ENCODE measurements at regions of chr13 and their contacts with region 1.

Region 1: DNA sequence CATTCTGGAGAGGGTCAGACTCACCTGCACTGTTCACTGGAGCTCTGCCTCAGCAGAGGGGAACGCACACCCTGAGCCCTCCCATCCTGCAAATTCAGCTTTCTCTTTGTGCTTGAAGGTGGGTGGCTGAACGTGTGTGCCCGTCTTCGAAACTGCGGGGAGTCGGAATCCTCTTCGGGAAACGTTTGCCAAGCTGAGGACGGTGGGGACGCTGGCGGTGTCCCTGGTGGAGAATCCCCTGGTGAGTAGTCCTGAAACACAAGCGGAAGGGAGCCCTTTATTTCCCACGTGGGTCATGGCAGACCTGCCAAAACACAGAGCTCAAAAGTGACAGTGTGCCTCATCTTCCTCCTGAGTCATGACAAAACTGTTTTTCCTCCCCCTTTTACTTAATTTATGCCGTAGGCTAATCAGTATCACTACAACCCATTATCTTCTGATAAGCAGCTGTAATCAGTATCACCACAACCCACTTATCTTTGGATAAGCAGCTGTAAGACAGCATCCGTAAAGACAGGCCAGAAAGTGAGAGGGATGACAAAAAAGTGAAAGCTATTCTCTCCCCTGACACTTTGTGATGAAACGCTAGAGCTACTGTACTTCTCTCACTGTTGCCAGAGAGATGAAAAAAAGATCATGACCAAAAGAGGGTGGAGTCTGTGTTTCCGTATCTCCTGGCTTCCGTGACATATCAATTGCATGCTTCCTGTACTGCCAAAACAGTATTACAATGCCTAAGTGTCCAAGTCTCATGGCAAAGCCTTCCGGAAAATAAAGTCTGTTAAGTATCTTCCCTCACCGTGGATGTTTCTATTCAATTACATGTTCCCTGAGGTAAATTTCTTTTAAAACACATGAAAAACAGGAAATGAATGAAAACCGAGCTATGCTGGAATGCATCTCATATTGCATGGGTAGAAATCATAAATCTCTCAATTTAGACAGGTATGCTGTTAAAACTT is 155.5 kb downstream of the TBC1D4 start:
- DNase-seq: no peak
- ATAC-seq: peak; percentile 89
- H3K4me3 ChIP-seq: peak overlapping the region; percentile 34; the same call in 1 of the 2 replicates
- H3K27ac ChIP-seq: peak overlapping the region; percentile 22
- H3K4me1 ChIP-seq: peaks cover 14% of the 10 kb centered on the region
- H3K27me3 ChIP-seq: no peaks in the 10 kb centered on the region
- CTCF ChIP-seq: no peak
- EP300 ChIP-seq: no peak
- POLR2A ChIP-seq: no peak
- RAD21 ChIP-seq: no peak

Region 2: GRCh38 chr13:75145927-75146326 is 180.5 kb before region 1 on chr13:
- CTCF ChIA-PET with region 1: no interaction called
- POLR2A ChIA-PET with region 1: no interaction called
- RAD21 ChIA-PET with region 1: no interaction called
- SMC1A ChIA-PET with region 1: no interaction called
- in situ Hi-C with region 1: no loop called
- intact Hi-C with region 1: no loop called
- DNase-seq: no peak
- ATAC-seq: no peak
- H3K4me3 ChIP-seq: no peak overlapping the region
- H3K27ac ChIP-seq: no peak overlapping the region
- H3K4me1 ChIP-seq: no peaks in the 10 kb centered on the region
- H3K27me3 ChIP-seq: no peaks in the 10 kb centered on the region
- CTCF ChIP-seq: no peak
- EP300 ChIP-seq: no peak
- POLR2A ChIP-seq: no peak
- RAD21 ChIP-seq: no peak

Region 3: DNA sequence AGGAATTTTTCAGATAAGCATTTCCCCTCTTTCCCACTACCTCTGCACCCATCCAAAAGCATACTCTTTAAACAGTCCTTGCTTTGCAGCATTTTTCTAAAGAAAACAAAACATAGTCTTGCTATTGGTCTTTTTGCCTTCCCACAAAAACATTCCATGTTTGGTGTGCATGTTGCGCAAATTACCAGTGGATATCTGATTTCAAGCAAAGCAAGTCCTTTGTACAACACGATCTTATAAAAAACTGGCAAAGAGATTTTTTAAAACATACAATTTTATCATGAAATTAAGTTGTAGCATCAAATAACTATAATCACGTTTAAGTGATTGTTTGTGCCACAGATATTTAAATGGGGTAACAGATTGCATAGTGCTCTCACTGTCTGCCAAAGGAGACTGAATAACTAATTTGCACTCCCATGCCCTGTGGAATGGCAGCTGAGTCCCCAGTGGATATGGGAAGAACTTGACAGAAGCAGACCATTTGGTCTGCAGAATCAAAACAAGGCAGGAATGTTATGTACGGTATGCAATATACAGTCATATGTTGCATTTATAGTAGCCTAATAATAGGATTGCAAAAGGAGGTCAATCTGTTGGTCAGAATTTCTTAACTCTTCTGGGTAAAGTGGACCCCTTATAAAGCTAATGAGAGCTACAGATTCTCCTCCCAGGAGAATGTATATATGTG is 130.2 kb before region 1 on chr13:
- CTCF ChIA-PET with region 1: no interaction called
- POLR2A ChIA-PET with region 1: no interaction called
- RAD21 ChIA-PET with region 1: no interaction called
- SMC1A ChIA-PET with region 1: no interaction called
- in situ Hi-C with region 1: no loop called
- intact Hi-C with region 1: no loop called
- DNase-seq: no peak
- ATAC-seq: no peak
- H3K4me3 ChIP-seq: no peak overlapping the region
- H3K27ac ChIP-seq: no peak overlapping the region
- H3K4me1 ChIP-seq: no peaks in the 10 kb centered on the region
- H3K27me3 ChIP-seq: no peaks in the 10 kb centered on the region
- CTCF ChIP-seq: no peak
- EP300 ChIP-seq: no peak
- POLR2A ChIP-seq: no peak
- RAD21 ChIP-seq: no peak

Region 4: DNA sequence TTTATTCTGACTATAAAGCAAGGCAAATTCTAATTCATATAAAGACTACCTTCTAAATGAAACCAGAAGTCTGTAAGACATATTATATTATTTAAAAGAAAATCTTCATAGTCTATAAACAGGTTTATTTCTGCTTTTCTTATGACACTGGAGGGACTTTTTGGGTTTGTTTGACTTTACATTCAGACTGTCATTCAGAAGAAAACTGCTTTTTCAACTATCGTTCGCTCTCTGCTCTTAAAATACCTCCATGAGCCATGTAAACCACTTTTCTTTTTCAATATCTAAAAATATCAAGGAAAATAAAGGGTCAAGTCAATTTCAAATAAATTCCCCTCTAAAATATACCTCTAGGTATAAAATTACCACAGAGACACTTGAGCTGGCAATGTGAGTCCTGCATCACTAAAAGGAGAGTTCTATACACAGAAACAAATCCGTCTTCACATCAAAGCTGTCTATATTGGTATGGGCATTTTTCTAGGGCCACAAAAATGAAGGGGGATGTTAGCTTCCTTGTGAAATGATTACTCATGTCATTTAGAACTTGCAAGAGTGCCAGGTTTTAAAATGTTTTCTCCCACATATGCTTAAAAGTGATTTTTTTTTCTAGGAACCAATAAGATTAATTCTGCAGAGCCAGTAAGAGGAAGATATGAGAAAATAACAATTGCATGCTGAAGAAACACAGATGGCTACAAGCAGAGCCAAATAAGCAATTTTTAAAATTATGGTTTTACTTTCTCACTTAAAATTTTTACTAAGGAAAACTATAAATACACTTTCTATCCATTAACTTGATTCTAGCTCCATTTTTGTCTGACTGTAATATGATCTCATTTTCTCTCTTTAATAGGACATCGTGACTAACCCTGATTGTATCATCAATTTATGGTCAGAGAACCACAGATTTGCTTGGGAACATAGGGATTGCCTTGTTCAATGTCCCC is 26.3 kb before region 1 on chr13:
- CTCF ChIA-PET with region 1: interaction called, 3 read pairs
- POLR2A ChIA-PET with region 1: interaction called, 4 read pairs
- RAD21 ChIA-PET with region 1: interaction called, 4 read pairs
- SMC1A ChIA-PET with region 1: interaction called, 12 read pairs
- in situ Hi-C with region 1: no loop called
- intact Hi-C with region 1: no loop called
- DNase-seq: peak; percentile 67
- ATAC-seq: peak; percentile 80
- H3K4me3 ChIP-seq: no peak overlapping the region
- H3K27ac ChIP-seq: peak overlapping the region; percentile 78
- H3K4me1 ChIP-seq: peaks cover 12% of the 10 kb centered on the region
- H3K27me3 ChIP-seq: no peaks in the 10 kb centered on the region
- CTCF ChIP-seq: no peak
- EP300 ChIP-seq: peak; percentile 62 to 71; a peak in 3 of 4 replicates
- POLR2A ChIP-seq: no peak
- RAD21 ChIP-seq: no peak

Region 5: DNA sequence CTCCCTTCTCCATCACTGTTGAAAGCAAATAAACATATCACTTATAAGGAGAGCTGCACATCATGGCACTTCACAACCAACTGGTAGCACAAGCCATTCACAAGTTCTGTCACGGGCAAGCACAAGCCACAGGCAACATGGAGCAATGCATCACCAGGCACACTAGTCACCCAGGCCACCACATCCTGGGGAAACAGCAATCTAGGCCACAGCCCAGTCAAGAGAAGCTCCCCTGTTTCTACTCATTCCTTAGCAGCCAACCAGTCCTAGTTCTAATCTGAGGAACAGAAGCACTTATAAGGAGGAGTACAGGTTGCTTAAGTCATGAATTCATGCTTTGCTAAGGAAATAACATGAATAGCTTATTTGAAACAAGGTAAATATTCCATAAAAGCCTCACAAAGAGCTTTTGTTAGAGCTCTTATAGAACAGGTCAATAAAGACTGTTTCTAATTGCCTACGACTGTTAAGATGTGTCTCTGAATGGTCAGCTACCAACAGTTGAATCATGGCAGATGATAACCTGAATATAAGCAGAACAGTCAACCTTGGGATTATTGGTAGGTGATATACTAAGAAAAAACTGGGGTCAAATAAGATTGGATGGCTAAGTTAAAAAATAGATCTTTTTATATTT is 13.5 kb before region 1 on chr13:
- CTCF ChIA-PET with region 1: interaction called, 14 read pairs
- POLR2A ChIA-PET with region 1: interaction called, 6 read pairs
- RAD21 ChIA-PET with region 1: interaction called, 17 read pairs
- SMC1A ChIA-PET with region 1: interaction called, 27 read pairs
- in situ Hi-C with region 1: no loop called
- intact Hi-C with region 1: no loop called
- DNase-seq: no peak
- ATAC-seq: peak; percentile 54
- H3K4me3 ChIP-seq: no peak overlapping the region
- H3K27ac ChIP-seq: no peak overlapping the region
- H3K4me1 ChIP-seq: peaks cover under 1% of the 10 kb centered on the region; the same call in 1 of the 2 replicates
- H3K27me3 ChIP-seq: no peaks in the 10 kb centered on the region
- CTCF ChIP-seq: no peak
- EP300 ChIP-seq: no peak
- POLR2A ChIP-seq: no peak
- RAD21 ChIP-seq: no peak

Region 6: DNA sequence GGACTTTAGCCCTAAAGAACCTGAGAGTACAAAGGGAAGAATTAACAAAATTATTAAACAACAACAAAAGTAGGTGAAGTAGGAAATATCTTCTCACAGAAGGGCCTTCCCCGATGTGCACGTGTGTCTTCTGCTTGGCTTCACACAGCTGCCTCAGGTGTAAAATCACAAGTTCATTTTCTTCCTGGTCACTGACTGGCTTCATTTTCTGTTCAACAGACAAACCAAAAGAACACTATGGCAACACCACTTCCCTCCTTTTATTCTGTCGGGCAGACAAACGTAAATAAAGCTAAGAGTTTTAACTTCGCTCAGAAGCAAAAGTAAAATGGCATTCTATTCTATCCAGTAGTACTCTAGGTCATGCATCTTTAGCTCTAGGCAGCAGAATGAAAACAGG is 14.6 kb after region 1 on chr13:
- CTCF ChIA-PET with region 1: interaction called, 5 read pairs
- POLR2A ChIA-PET with region 1: interaction called, 6 read pairs
- RAD21 ChIA-PET with region 1: interaction called, 3 read pairs
- SMC1A ChIA-PET with region 1: interaction called, 15 read pairs
- in situ Hi-C with region 1: no loop called
- intact Hi-C with region 1: no loop called
- DNase-seq: no peak
- ATAC-seq: peak; percentile 73
- H3K4me3 ChIP-seq: no peak overlapping the region
- H3K27ac ChIP-seq: no peak overlapping the region
- H3K4me1 ChIP-seq: no peaks in the 10 kb centered on the region
- H3K27me3 ChIP-seq: no peaks in the 10 kb centered on the region
- CTCF ChIP-seq: no peak
- EP300 ChIP-seq: no peak
- POLR2A ChIP-seq: no peak
- RAD21 ChIP-seq: no peak

Region 7: GRCh38 chr13:75357576-75358289 is 31.3 kb after region 1 on chr13:
- CTCF ChIA-PET with region 1: interaction called, 17 read pairs
- POLR2A ChIA-PET with region 1: no interaction called
- RAD21 ChIA-PET with region 1: interaction called, 6 read pairs
- SMC1A ChIA-PET with region 1: interaction called, 4 read pairs
- in situ Hi-C with region 1: no loop called
- intact Hi-C with region 1: no loop called
- DNase-seq: no peak
- ATAC-seq: peak; percentile 95
- H3K4me3 ChIP-seq: no peak overlapping the region
- H3K27ac ChIP-seq: no peak overlapping the region
- H3K4me1 ChIP-seq: no peaks in the 10 kb centered on the region
- H3K27me3 ChIP-seq: no peaks in the 10 kb centered on the region
- CTCF ChIP-seq: peak; percentile 64 to 83 (median 75)
- EP300 ChIP-seq: no peak
- POLR2A ChIP-seq: no peak
- RAD21 ChIP-seq: peak; percentile 66